Panc1 (cell line): ENCODE measurements at regions of chr3 and their contacts with region 1.

Region 1: GRCh38 chr3:136678981-136679380 is 73.2 kb downstream of the STAG1 start:
- DNase-seq: no peak
- ATAC-seq: no peak
- H3K4me3 ChIP-seq: no peak overlapping the region
- H3K27ac ChIP-seq: no peak overlapping the region
- H3K4me1 ChIP-seq: no peaks in the 10 kb centered on the region
- H3K27me3 ChIP-seq: no peaks in the 10 kb centered on the region
- CTCF ChIP-seq: no peak

Region 2: DNA sequence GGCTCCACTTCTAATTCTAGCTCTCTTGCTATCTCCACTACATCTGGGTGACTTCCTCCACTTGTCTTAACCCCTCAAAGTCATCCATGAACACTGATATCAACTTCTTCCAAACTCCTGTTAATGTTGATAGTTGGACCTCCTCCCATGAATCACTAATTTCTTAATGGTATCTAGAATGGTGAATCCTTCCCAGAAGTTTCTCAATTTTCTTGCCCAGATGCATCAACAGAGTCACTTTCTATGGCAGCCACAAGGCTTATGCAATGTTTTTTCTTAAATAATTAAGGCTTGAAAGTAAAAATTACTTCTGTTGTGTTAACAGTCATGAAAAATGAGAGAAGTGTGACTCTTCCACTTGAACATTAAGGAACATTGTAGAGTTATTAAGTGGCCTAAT is 264.5 kb before region 1 on chr3:
- CTCF ChIA-PET with region 1: no interaction called
- POLR2A ChIA-PET with region 1: no interaction called
- in situ Hi-C with region 1: no loop called
- intact Hi-C with region 1: no loop called
- DNase-seq: no peak
- ATAC-seq: no peak
- H3K4me3 ChIP-seq: no peak overlapping the region
- H3K27ac ChIP-seq: no peak overlapping the region
- H3K4me1 ChIP-seq: no peaks in the 10 kb centered on the region
- H3K27me3 ChIP-seq: no peaks in the 10 kb centered on the region
- CTCF ChIP-seq: no peak

Region 3: GRCh38 chr3:136495213-136495612 is 183.8 kb before region 1 on chr3:
- CTCF ChIA-PET with region 1: no interaction called
- POLR2A ChIA-PET with region 1: no interaction called
- in situ Hi-C with region 1: no loop called
- intact Hi-C with region 1: no loop called
- DNase-seq: no peak
- ATAC-seq: no peak
- H3K4me3 ChIP-seq: no peak overlapping the region
- H3K27ac ChIP-seq: no peak overlapping the region
- H3K4me1 ChIP-seq: no peaks in the 10 kb centered on the region
- H3K27me3 ChIP-seq: no peaks in the 10 kb centered on the region
- CTCF ChIP-seq: no peak

Region 4: DNA sequence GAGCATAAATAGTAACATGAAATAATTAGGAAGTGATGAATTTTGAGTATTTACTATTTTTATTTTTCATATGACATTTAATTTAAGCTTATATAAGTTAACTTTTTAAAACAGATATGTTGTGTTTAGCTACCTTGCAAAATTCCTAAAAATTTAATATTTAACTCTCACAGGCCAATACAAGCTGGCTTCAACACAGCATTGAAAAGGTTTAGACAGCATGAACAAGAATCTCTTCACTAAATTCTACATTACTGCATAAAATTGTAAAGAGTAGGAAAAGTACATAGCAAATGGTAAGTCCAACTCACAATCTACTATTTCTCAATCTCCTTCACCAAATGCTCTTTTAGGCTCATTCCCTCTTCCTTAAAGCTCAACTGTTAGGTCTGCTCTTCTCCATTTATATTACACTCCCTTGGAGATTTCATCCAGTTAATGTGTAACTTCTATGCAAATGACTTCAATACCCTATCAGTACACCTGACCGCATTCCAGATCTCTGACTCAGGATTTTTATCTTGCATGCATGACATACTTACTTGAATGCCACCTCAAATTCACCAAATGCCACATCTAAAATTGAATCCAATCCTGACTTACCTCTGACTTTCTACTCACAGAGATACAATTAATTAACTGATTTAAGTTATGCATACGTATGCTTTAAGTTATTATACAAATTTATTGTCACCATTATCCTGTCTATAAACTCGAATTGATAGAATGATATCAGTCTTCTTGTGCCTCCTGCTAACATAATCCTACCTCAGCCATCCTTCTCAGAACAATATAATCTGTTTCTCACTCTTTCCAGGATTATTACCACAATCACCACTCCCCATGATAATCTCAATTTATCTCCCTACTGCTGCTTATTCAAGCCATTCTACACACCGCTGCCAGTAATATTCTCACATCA is 53.8 kb before region 1 on chr3:
- CTCF ChIA-PET with region 1: no interaction called
- POLR2A ChIA-PET with region 1: no interaction called
- in situ Hi-C with region 1: no loop called
- intact Hi-C with region 1: no loop called
- DNase-seq: no peak
- ATAC-seq: peak; percentile 77
- H3K4me3 ChIP-seq: no peak overlapping the region
- H3K27ac ChIP-seq: 0 out of 2 replicates have a peak overlapping the region, but pooled peaks have one; percentile 4
- H3K4me1 ChIP-seq: peaks cover 8% of the 10 kb centered on the region; the same call in 1 of the 2 replicates
- H3K27me3 ChIP-seq: no peaks in the 10 kb centered on the region
- CTCF ChIP-seq: no peak

Region 5: DNA sequence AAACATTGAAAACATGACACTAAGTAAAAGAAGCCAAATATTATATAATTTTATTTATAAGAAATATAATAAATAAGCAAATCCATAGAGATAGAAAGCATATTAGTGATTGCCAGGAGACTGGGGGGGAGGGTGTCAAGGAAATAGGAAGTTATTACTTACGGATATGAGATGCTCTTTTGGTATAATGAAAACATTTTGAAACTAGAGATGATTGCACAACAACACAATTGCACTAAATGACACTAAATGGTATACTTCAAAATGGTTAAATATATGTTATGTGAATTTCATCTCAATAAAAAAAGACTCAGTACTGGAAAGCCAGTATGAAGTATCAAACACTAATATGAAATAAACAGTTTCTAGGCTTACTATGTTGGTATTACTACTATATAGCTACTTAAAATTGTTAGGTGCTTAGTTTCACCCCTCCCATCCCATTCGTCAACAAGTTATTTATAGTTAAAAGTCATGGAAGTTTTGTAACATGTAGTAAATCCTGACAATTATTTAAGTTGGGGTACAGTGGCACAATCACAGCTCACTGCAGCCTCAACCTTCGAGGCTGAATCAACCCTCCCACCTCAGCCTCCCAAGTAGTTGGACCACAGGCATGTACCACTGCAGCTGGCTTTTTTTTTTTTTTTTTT is 29.5 kb after region 1 on chr3:
- CTCF ChIA-PET with region 1: no interaction called
- POLR2A ChIA-PET with region 1: interaction called, 11 read pairs
- in situ Hi-C with region 1: no loop called
- intact Hi-C with region 1: no loop called
- DNase-seq: no peak
- ATAC-seq: no peak
- H3K4me3 ChIP-seq: no peak overlapping the region
- H3K27ac ChIP-seq: no peak overlapping the region
- H3K4me1 ChIP-seq: peaks cover 4% of the 10 kb centered on the region; the same call in 1 of the 2 replicates
- H3K27me3 ChIP-seq: no peaks in the 10 kb centered on the region
- CTCF ChIP-seq: no peak